Vagina (tissue), 2 donors: ENCODE measurements at regions of chr11 and their contacts with region 1.

Region 1: GRCh38 chr11:45089676-45090499 is 56.6 kb upstream of the PRDM11 start:
- DNase-seq: no peak
- H3K4me3 ChIP-seq: no peak overlapping the region
- H3K27ac ChIP-seq: peak overlapping the region; percentile 82
- H3K4me1 ChIP-seq: peaks cover 59% of the 10 kb centered on the region
- H3K27me3 ChIP-seq: no peaks in the 10 kb centered on the region
- CTCF ChIP-seq: no peak
- POLR2A ChIP-seq: no peak

Region 2: DNA sequence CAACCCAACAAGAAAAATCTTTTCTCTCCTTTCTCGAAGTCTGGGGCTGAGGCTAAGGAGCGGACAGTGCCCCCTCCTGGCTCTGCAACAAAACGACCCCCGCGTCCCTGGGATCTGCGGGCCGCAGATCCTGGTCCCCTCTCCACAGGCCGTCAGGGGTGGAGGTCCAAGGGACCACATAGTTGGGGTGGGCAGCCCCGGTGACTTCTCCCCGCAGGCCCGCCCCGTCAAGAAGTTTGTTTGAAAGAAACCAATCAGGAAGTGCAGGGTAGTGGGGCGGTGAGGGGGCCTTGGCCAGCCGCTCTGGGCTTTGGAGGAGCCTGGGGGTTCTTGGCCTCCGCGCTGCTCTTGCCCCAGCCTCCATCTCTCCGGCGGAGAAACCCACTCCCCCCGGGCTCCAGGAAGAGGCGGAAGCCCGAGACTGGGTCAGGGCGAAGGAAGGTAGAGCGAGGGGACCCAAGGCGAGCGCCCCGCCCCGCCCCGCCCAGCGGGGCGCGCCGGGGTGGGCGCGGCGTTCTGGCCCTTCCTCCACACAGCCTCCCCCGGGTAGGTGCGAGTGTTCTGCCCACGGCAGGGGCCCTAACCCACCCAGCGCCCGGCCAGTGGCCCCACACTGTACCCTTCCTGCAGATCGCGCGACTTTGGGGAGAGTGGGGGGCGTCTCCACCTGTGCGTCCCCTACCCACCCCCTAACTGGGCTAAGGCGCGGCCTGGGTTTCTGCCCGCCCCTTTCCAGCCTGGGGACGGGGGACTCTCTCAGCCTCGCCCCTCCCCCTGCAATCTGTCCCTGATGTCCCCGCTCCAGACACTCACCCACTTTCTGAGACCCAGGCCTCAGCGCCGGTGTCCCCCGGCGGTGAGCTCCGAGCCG is 140.5 kb before region 1 on chr11:
- intact Hi-C with region 1: no loop called
- DNase-seq: no peak
- H3K4me3 ChIP-seq: peak overlapping the region; percentile 71 to 75
- H3K27ac ChIP-seq: peak overlapping the region; percentile 79
- H3K4me1 ChIP-seq: peaks cover 9% of the 10 kb centered on the region
- H3K27me3 ChIP-seq: no peaks in the 10 kb centered on the region
- CTCF ChIP-seq: peak in 2 of 3 experiments; percentile 20 to 21
- POLR2A ChIP-seq: peak in 1 of 2 donors; percentile 20

Region 3: DNA sequence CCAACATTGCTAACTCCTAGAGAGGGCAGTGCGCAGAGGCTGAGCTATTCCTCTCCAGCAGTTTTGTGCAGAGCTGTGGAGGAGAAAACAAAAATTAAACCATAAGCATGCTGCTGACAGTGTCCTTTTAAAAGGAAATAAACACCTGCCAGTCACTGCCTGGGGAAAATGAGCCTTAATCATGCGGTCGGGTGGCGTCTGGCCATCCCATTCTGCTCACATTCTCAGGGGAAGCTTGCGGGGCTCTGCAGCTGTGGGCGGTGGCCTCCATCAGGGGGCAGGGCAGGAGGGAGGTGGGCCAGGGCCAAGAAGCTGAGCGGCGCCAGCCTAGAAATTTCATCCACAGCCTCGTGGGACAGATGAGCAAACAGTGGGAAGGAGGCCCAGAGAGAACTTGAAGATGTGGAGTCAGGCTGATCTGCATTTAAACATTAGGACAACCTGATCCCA is 68.2 kb before region 1 on chr11:
- intact Hi-C with region 1: loop called (anchors 5 kb)
- DNase-seq: no peak
- H3K4me3 ChIP-seq: no peak overlapping the region
- H3K27ac ChIP-seq: peak overlapping the region; percentile 64
- H3K4me1 ChIP-seq: peaks cover 23% of the 10 kb centered on the region
- H3K27me3 ChIP-seq: no peaks in the 10 kb centered on the region
- CTCF ChIP-seq: no peak
- POLR2A ChIP-seq: no peak